ENCODE measurements at regions of chr11 and their contacts with region 1.

Region 1: GRCh38 chr11:123020968-123021367 is 39.3 kb upstream of the BSX start:
- DNase-seq: no peak

Region 2: GRCh38 chr11:121733858-121734257 is 1287.1 kb before region 1 on chr11:
- intact Hi-C with region 1: no loop called
- DNase-seq: no peak

Region 3: GRCh38 chr11:122418032-122418431 is 602.9 kb before region 1 on chr11:
- intact Hi-C with region 1: no loop called
- DNase-seq: no peak

Region 4: DNA sequence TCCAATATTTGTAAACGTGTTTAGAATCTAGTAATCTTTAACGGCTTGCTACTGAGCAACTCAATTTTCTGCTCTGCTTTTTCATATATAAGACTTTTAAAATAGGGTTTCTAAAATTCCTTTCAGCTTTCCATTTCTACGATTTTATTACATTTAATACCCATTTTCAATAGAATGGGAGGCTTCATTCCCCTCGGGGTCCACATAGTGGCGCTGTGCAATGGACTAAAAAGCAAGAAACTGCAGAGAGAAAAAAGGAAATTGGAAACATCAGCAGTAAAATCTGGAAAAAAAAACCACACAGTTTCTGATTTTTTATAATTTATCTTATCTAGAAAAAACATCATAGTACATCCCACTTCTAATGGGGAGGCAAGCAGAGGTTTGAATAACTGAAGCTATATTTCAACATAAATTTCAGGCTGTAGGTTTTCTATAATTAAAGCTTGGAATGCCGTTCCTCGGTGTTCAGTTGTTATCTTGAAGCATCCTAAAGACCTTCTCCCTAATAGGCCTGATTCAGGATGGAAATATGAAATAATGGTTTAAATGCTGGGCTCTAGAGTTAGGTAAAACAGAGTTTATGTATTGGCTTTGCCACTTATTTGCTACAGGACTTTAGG is 157.2 kb before region 1 on chr11:
- intact Hi-C with region 1: loop called (anchors 1 kb)
- DNase-seq: no peak

Region 5: DNA sequence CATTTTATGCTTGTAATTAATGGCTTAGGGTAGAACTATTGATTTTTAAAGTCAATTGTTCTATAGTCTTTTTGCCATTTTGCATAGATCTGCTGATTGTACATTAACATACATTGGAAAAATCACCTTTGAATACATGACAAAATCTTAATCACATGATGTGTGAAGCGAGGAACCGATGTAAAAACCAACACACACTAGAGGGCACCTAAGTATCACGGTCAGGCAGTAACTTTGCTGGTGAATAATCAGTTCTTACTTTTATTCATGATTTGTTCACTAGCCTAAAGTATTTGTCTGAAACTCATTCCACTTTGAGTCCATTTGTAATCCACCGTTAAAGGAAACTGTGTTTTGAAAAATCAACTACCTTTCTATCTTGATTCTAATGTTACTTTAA is 110.2 kb before region 1 on chr11:
- intact Hi-C with region 1: loop called (anchors 10 kb)
- DNase-seq: no peak

Region 6: GRCh38 chr11:122963961-122964360 is 57.0 kb before region 1 on chr11:
- intact Hi-C with region 1: no loop called
- DNase-seq: no peak

Measured in cardiac septum (tissue), 1 donor.